Head of caudate nucleus (tissue), 42 donors: ENCODE measurements at regions of chr2 and their contacts with region 1.

Region 1: GRCh38 chr2:135913727-135914365 is 37.6 kb upstream of the MCM6 start:
- DNase-seq: peak in 15 of 42 donors; percentile 18 to 77 (median 34)

Region 2: GRCh38 chr2:136129601-136130000 is 215.8 kb after region 1 on chr2:
- intact Hi-C with region 1: loop called (anchors 10 kb)
- DNase-seq: no peak

Region 3: GRCh38 chr2:136384531-136385303 is 470.9 kb after region 1 on chr2:
- intact Hi-C with region 1: loop called (anchors 2 kb)
- DNase-seq: peak in 41 of 42 donors; percentile 17 to 80 (median 51)